Breast epithelium (tissue), 4 donors: ENCODE measurements at regions of chr9 and their contacts with region 1.

Region 1: DNA sequence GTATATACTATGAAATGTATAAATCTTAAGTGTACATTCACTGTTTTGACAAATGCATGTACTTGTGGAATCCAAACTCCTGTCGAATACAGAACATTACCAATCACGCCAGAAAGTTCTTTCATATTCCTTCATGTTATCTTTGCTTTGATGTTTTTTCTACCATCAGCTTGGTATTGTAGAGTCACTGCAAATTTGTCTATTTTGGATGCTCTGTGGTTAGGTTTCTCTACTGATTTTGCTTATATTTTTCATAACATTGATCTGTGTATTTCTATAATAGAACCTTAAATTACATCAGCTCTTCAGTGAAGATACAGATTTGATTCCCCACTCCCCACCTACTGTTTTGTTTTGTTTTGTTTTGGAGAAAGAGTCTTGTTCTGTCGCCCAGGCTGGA is 30.8 kb downstream of the HABP4 start:
- DNase-seq: no peak
- H3K4me3 ChIP-seq: no peak overlapping the region
- H3K27ac ChIP-seq: no peak overlapping the region
- H3K4me1 ChIP-seq: no peaks in the 10 kb centered on the region
- H3K27me3 ChIP-seq: no peaks in the 10 kb centered on the region
- CTCF ChIP-seq: no peak
- POLR2A ChIP-seq: no peak

Region 2: GRCh38 chr9:96500696-96501632 is 20.2 kb after region 1 on chr9:
- intact Hi-C with region 1: no loop called
- DNase-seq: no peak
- H3K4me3 ChIP-seq: no peak overlapping the region
- H3K27ac ChIP-seq: no peak overlapping the region
- H3K4me1 ChIP-seq: no peaks in the 10 kb centered on the region
- H3K27me3 ChIP-seq: no peaks in the 10 kb centered on the region
- CTCF ChIP-seq: no peak
- POLR2A ChIP-seq: no peak

Region 3: DNA sequence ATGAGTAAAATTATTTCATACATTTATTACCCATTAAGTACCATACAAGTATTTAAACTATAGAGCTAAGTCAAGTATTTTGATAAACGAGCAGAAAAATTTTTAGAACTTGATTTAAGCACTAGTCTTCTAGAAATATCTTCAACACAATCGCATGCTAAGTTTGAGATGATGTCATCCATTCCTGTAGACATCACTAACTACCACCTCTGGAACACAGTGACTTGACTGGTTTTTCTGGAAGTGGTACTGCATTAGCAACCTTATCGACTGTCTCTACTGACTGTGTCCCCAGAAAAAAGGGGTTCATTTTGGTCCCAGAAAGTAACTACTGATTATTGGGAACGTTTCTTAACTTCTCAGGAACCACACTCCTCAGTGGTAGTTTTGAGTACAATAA is 69.9 kb after region 1 on chr9:
- intact Hi-C with region 1: loop called (anchors 2 kb)
- DNase-seq: no peak
- H3K4me3 ChIP-seq: no peak overlapping the region
- H3K27ac ChIP-seq: no peak overlapping the region
- H3K4me1 ChIP-seq: no peaks in the 10 kb centered on the region
- H3K27me3 ChIP-seq: no peaks in the 10 kb centered on the region
- CTCF ChIP-seq: no peak
- POLR2A ChIP-seq: no peak